Activated CD4-positive, alpha-beta memory T cell treated with anti-CD3 and anti-CD28 coated beads for 36 hours (primary cell): ENCODE measurements at regions of chr10 and their contacts with region 1.

Region 1: DNA sequence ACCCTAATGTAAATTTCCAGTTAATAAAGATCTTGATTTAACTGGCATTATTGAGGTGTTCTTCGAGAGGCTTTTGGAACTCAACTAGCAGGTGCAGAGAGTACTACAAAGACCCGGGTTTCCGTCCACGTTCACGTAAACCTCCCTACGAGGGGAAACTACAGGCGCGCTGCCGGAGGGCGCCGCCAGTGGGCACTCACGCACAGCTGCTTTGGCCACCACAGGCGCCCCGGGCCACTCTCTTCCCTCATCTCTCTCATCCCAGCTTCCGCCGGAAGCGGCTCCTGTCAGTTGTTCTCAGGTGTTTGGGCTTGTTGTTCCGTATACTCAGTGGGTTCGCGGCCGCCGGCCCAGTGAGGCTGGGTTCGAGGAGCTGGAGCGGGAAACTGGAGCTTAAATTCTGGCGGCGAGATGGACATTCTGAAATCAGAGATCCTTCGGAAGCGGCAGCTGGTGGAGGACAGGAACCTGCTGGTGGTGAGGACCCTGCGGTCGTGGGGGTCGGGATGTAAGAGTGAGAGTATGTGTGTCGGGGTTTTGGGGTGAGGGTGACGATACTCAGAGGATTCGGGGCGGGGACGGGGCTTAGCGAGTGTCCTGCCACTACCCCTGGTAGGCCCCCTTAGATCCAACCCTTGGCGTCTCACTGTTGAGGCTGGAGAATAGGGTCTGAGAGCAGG is at the start of gene PRPF18:
- DNase-seq: peak; percentile 96
- H3K4me3 Mint-ChIP-seq: peak within 1 kb of the TSS; percentile 100
- H3K27ac Mint-ChIP-seq: peak within 1 kb of the TSS; percentile 70
- H3K4me1 Mint-ChIP-seq: peaks cover 26% of the 10 kb centered on the region
- H3K27me3 Mint-ChIP-seq: peaks cover 15% of the 10 kb centered on the region
- total RNA-seq, gene PRPF18: 21.9 to 25.1 TPM

Region 2: GRCh38 chr10:13206546-13207443 is 380.0 kb before region 1 on chr10:
- CTCF ChIA-PET with region 1: no interaction called
- POLR2A ChIA-PET with region 1: no interaction called
- intact Hi-C with region 1: no loop called
- DNase-seq: no peak
- H3K4me3 Mint-ChIP-seq: no peak overlapping the region
- H3K27ac Mint-ChIP-seq: no peak overlapping the region
- H3K4me1 Mint-ChIP-seq: no peaks in the 10 kb centered on the region
- H3K27me3 Mint-ChIP-seq: no peaks in the 10 kb centered on the region

Region 3: DNA sequence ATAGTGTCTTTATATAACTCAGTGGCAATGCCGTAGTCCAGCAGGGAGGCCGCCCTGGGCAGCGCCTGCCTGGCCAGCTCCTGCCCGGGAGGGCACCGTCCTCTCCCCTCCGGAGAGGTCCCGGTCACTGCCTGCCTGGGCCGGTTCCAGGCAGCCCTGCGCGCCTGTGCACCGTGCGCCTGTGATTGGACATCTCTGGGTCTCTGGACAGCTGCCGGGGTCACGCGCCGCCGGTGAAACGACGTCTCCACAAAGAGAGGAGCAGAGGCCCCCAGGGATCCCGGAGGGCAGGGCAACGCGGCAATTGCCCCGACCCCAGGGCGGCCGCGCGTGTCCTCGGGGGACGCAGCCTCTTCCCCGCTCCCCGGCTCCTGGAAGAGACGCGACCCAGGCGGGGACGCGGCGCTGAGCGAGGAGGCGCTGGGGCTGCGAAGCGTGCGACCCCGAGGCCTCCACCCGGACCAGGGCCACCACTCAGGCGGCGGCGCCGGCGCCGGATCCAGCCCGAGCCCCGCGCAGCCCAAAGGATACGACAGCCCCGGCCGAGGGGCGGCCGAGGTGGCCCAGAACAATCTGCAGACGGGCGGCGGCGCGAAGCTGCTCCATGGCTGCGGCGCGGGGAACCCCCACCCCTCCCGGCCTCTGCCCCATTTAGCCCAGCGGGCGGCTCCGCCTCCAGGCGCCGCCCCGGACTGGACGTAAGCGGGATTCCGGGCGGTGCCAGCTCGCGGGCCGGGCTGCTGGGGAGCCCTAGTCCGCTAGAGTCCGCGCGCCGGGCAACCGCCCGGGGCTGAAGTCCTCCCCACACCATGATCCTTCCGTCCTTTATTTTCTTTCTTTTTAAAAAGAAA is 287.2 kb before region 1 on chr10 and contains the start of gene PHYH:
- CTCF ChIA-PET with region 1: no interaction called
- POLR2A ChIA-PET with region 1: no interaction called
- intact Hi-C with region 1: loop called (anchors 2 kb)
- DNase-seq: peak; percentile 85
- H3K4me3 Mint-ChIP-seq: peak within 1 kb of the TSS; percentile 78
- H3K27ac Mint-ChIP-seq: peak within 1 kb of the TSS; percentile 85
- H3K4me1 Mint-ChIP-seq: peaks cover 16% of the 10 kb centered on the region
- H3K27me3 Mint-ChIP-seq: no peaks in the 10 kb centered on the region
- total RNA-seq, gene PHYH: 14.9 to 15.4 TPM

Region 4: GRCh38 chr10:13371897-13372470 is 214.8 kb before region 1 on chr10:
- CTCF ChIA-PET with region 1: interaction called, 17 read pairs
- POLR2A ChIA-PET with region 1: no interaction called
- intact Hi-C with region 1: loop called (anchors 2 kb)
- DNase-seq: peak; percentile 78
- H3K4me3 Mint-ChIP-seq: no peak overlapping the region
- H3K27ac Mint-ChIP-seq: no peak overlapping the region
- H3K4me1 Mint-ChIP-seq: no peaks in the 10 kb centered on the region
- H3K27me3 Mint-ChIP-seq: no peaks in the 10 kb centered on the region

Region 5: DNA sequence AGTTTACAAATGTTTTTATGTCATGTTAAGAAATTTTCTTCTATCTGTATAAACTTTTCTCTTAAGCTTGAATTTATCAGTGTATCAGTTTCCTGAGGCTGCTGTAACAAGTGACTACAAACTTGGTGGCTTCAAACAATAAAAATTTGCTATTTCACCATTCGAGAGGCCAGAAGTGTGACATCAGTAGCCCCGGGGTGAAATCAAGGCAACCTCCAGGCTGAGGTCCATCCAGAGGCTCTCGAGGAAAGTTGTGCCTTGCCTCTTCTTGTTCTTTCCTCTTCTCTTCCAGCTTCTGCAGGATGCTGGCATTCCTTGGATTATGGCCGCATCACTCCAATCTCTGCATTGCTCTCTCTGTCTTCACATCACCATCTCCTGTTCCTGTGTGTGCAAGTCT is 51.5 kb before region 1 on chr10:
- CTCF ChIA-PET with region 1: no interaction called
- POLR2A ChIA-PET with region 1: no interaction called
- intact Hi-C with region 1: no loop called
- DNase-seq: no peak
- H3K4me3 Mint-ChIP-seq: no peak overlapping the region
- H3K27ac Mint-ChIP-seq: no peak overlapping the region
- H3K4me1 Mint-ChIP-seq: no peaks in the 10 kb centered on the region
- H3K27me3 Mint-ChIP-seq: peaks cover 33% of the 10 kb centered on the region

Region 6: GRCh38 chr10:13613519-13613918 is 26.7 kb after region 1 on chr10:
- CTCF ChIA-PET with region 1: no interaction called
- POLR2A ChIA-PET with region 1: no interaction called
- intact Hi-C with region 1: no loop called
- DNase-seq: no peak
- H3K4me3 Mint-ChIP-seq: no peak overlapping the region
- H3K27ac Mint-ChIP-seq: no peak overlapping the region
- H3K4me1 Mint-ChIP-seq: no peaks in the 10 kb centered on the region
- H3K27me3 Mint-ChIP-seq: no peaks in the 10 kb centered on the region

Region 7: GRCh38 chr10:13787015-13787421 is 200.2 kb after region 1 on chr10:
- CTCF ChIA-PET with region 1: interaction called, 3 read pairs
- POLR2A ChIA-PET with region 1: no interaction called
- intact Hi-C with region 1: loop called (anchors 1 kb)
- DNase-seq: peak; percentile 89
- H3K4me3 Mint-ChIP-seq: no peak overlapping the region
- H3K27ac Mint-ChIP-seq: peak overlapping the region; percentile 82
- H3K4me1 Mint-ChIP-seq: peaks cover 31% of the 10 kb centered on the region
- H3K27me3 Mint-ChIP-seq: no peaks in the 10 kb centered on the region